PC-9 (cell line): ENCODE measurements at regions of chr3 and their contacts with region 1.

Region 1: DNA sequence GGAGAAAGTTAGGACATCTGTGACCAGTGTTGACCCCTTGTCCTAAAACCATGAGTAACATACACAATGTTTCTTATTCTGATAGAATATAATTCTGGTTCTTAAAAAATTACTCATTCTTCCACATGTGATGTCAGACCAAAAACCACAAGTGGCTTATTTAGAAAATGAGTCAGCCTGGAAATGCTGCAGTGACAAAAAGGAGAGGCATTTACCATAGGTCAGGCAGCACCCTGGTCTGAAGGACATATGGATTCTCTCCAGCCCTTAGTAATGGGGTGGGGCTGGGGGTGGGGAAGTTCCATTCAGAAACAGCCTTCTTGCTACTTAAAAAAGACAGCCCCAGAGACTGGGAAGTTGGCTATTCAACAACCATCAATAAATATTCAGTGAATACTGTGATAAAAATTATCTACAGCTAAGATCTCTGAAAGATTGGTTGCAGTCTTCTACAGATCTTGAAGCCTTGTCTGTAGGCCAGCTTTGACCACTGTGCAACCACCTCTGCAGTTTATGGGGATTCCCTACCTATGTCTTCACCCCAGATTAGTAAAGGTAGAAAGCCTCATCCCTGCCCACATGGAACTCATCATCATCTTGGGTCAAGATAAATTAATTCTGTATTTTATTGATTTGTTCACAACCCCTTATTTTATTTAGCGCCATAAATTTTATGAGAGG is 34.9 kb upstream of the TIMP4 start:
- DNase-seq: peak; percentile 69 to 96
- H3K4me3 ChIP-seq: peak overlapping the region; percentile 27; the same call in 1 of the 2 replicates
- H3K27ac ChIP-seq: peak overlapping the region; percentile 97
- H3K4me1 ChIP-seq: peaks cover 72% of the 10 kb centered on the region
- H3K27me3 ChIP-seq: no peaks in the 10 kb centered on the region
- CTCF ChIP-seq: no peak

Region 2: DNA sequence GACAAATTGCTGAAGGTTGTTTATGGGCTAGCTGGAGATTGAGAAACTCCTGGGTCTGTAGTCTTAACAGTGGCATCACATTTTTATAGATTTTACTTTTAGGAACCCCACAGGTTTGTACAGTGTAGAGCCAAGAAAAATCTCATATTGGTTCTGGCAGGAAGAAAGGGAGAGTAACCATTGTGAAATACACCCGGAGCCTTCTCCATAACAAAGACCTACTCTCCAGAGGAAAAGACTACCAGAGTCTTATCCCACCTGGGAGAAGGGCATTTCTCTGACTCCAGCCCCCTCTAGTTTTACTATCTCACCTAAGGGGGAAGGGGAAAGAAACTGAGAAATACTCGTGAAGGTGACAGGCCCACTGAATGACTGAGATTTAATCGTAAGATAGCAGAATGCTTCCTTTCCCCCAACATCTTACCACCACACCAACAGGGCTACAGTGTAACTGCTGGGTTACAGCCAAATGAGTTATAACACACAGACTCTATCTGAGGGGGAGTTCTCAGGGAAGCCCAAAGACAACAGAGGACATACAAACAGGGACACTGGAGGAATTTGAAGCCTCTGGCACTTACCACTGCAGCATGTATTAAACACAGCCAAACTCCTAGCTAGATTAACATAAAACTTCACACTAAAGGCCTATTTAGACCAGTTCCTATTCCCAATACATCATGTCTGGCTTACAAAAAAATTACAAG is 133.3 kb before region 1 on chr3:
- CTCF ChIA-PET with region 1: no interaction called
- POLR2A ChIA-PET with region 1: no interaction called
- intact Hi-C with region 1: no loop called
- DNase-seq: no peak
- H3K4me3 ChIP-seq: no peak overlapping the region
- H3K27ac ChIP-seq: no peak overlapping the region
- H3K4me1 ChIP-seq: no peaks in the 10 kb centered on the region
- H3K27me3 ChIP-seq: peaks cover 81% of the 10 kb centered on the region
- CTCF ChIP-seq: no peak

Region 3: DNA sequence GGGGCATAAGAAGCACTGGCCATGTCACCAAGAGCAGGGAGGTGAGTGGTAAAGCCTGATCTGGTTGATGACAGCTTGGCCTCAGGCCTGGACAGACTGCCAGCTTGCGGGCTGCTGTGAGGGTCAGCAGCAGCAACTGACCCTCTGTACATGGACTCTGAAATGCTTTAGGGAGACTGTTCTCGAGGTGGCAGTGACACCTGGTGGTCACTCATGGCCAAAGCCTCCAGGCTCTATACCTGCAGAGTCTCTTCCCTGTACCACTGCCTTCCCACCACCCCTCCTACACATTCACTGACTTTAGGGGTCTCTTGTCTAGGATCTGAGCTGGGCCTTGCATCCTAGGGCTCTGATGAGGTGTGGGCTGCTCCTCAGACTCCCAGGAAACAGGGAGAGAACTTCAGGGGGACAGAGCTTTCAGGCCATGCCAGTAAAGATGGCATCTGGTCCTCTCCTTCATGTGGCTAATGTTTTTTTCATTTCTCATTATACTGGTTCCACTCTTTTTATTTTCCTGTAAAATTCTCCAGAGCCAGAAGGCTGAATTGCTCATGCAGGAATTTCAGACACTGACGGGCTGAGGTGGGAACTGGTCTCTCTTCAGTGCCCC is 17.7 kb before region 1 on chr3:
- CTCF ChIA-PET with region 1: interaction called, 6 read pairs
- POLR2A ChIA-PET with region 1: interaction called, 3 read pairs
- intact Hi-C with region 1: loop called (anchors 1 kb)
- DNase-seq: peak in 1 of 2 experiments; percentile 47
- H3K4me3 ChIP-seq: no peak overlapping the region
- H3K27ac ChIP-seq: no peak overlapping the region
- H3K4me1 ChIP-seq: peaks cover 34% of the 10 kb centered on the region
- H3K27me3 ChIP-seq: no peaks in the 10 kb centered on the region
- CTCF ChIP-seq: peak; percentile 90

Region 4: DNA sequence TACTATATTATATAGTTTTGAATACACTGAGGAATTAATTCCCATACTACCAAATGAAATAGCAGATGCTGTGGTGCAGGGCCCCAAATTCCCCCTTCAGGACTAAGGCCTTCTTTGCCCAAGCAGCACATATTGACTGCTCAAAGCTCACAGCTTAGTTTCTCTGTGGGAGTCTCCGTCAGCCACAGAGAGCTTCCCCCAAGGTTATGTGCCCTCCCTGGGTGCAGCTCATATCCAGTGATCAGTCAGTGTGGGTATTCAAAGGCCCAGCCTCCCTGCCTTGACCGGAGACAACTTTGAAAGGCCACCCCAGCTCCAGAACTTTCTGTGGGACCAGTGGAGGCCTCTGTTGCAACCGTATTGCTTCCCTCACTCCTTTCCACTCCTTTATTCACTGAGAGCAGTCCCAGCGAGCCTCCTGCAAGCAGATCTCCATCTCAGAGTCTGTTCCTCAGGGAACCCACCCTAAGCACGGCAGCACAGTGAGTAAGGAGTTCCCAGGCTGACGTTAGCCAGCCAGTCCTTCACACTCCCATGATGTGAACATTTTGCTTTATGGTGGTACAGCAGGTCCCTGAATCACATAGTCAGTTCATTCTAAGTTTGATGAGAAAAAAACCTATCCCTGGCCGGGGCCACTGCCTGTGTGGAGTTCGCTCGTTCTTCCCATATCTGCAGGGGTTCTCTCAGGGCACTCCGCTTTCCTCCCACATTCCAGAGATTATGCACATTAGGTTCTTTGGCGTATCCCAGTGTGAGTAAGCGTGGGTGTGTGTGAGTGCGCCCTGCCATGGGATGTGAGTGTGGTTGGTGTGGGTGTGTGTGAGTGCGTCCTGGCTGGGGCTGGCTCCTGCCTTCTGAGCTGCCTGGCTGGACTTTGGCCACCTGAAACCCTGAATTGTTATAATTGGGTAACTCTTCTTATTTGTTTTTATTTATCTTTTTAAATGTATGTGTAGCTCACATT is 30.8 kb after region 1 on chr3:
- CTCF ChIA-PET with region 1: no interaction called
- POLR2A ChIA-PET with region 1: no interaction called
- intact Hi-C with region 1: loop called (anchors 2 kb)
- DNase-seq: no peak
- H3K4me3 ChIP-seq: no peak overlapping the region
- H3K27ac ChIP-seq: 0 out of 2 replicates have a peak overlapping the region, but pooled peaks have one; percentile 77
- H3K4me1 ChIP-seq: peaks cover 46% of the 10 kb centered on the region
- H3K27me3 ChIP-seq: no peaks in the 10 kb centered on the region
- CTCF ChIP-seq: no peak

Region 5: GRCh38 chr3:12235691-12236090 is 42.1 kb after region 1 on chr3:
- CTCF ChIA-PET with region 1: no interaction called
- POLR2A ChIA-PET with region 1: no interaction called
- intact Hi-C with region 1: no loop called
- DNase-seq: no peak
- H3K4me3 ChIP-seq: no peak overlapping the region
- H3K27ac ChIP-seq: no peak overlapping the region
- H3K4me1 ChIP-seq: peaks cover 12% of the 10 kb centered on the region
- H3K27me3 ChIP-seq: no peaks in the 10 kb centered on the region
- CTCF ChIP-seq: no peak

Region 6: GRCh38 chr3:12287727-12288191 is 94.1 kb after region 1 on chr3:
- CTCF ChIA-PET with region 1: no interaction called
- POLR2A ChIA-PET with region 1: no interaction called
- intact Hi-C with region 1: loop called (anchors 2 kb)
- DNase-seq: peak in 1 of 2 experiments; percentile 54
- H3K4me3 ChIP-seq: peak overlapping the region; percentile 85
- H3K27ac ChIP-seq: peak overlapping the region; percentile 91
- H3K4me1 ChIP-seq: peaks cover 26% of the 10 kb centered on the region
- H3K27me3 ChIP-seq: no peaks in the 10 kb centered on the region
- CTCF ChIP-seq: no peak

Region 7: GRCh38 chr3:12325586-12326515 is 132.2 kb after region 1 on chr3:
- CTCF ChIA-PET with region 1: no interaction called
- POLR2A ChIA-PET with region 1: no interaction called
- intact Hi-C with region 1: no loop called
- DNase-seq: no peak
- H3K4me3 ChIP-seq: no peak overlapping the region
- H3K27ac ChIP-seq: peak overlapping the region; percentile 33
- H3K4me1 ChIP-seq: peaks cover 11% of the 10 kb centered on the region
- H3K27me3 ChIP-seq: no peaks in the 10 kb centered on the region
- CTCF ChIP-seq: no peak

Region 8: GRCh38 chr3:12444582-12445468 is 251.2 kb after region 1 on chr3:
- CTCF ChIA-PET with region 1: no interaction called
- POLR2A ChIA-PET with region 1: no interaction called
- intact Hi-C with region 1: loop called (anchors 1 kb)
- DNase-seq: peak; percentile 92 to 99
- H3K4me3 ChIP-seq: peak overlapping the region; percentile 47
- H3K27ac ChIP-seq: peak overlapping the region; percentile 100
- H3K4me1 ChIP-seq: peaks cover 76% of the 10 kb centered on the region
- H3K27me3 ChIP-seq: no peaks in the 10 kb centered on the region
- CTCF ChIP-seq: no peak

Region 9: GRCh38 chr3:12471243-12471651 is 277.6 kb after region 1 on chr3:
- CTCF ChIA-PET with region 1: interaction called, 3 read pairs
- POLR2A ChIA-PET with region 1: no interaction called
- intact Hi-C with region 1: loop called (anchors 2 kb)
- DNase-seq: peak; percentile 76 to 92
- H3K4me3 ChIP-seq: no peak overlapping the region
- H3K27ac ChIP-seq: peak overlapping the region; percentile 92
- H3K4me1 ChIP-seq: peaks cover 66% of the 10 kb centered on the region
- H3K27me3 ChIP-seq: no peaks in the 10 kb centered on the region
- CTCF ChIP-seq: peak; percentile 64

Region 10: DNA sequence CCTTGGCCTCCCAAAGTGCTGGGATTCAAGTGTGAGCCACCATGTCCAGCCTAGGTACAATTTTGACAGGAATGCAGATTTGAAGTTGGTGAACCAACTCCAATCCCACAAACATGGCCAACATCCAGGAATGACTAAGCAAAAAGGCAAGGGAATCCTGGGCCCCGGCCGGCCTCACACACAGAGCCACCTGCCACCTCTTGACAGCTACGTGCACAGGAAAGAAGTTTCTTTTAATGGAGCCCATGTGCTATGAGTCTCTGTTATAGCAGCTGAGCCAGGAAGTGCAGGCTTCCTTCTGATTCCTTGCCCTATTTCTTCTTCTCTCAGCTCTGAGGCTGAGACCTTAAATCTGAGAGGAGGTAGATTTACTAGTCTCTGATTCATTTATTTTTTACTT is 556.6 kb after region 1 on chr3:
- CTCF ChIA-PET with region 1: no interaction called
- POLR2A ChIA-PET with region 1: no interaction called
- intact Hi-C with region 1: loop called (anchors 10 kb)
- DNase-seq: peak; percentile 65 to 74
- H3K4me3 ChIP-seq: no peak overlapping the region
- H3K27ac ChIP-seq: peak overlapping the region; percentile 93
- H3K4me1 ChIP-seq: peaks cover 58% of the 10 kb centered on the region
- H3K27me3 ChIP-seq: no peaks in the 10 kb centered on the region
- CTCF ChIP-seq: no peak